Sciatic nerve (tissue), 2 donors: ENCODE measurements at regions of chr1 and their contacts with region 1.

Region 1: GRCh38 chr1:78676347-78676982 is 26.8 kb downstream of the IFI44 start:
- DNase-seq: peak; percentile 69
- ATAC-seq: peak; percentile 66

Region 2: DNA sequence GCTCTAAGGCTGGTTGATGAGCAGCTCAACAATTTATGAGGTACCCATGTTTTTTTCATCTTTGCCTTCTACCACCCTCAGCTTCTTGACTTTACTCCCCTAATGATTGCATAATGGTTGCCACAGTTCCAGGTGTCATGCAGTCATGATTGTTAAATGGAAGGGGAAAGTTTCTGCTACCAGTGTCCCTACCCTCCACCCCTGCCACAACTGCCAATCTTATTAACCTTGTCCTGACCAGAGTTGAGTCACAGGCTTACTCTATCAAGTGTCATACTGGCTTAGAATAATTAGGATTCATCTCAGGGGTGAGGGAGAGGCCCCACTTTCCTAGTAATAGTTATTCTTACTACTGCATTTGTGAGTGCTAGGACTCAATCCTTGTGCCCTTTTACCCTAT is 689.7 kb before region 1 on chr1:
- intact Hi-C with region 1: no loop called
- DNase-seq: no peak
- ATAC-seq: no peak

Region 3: GRCh38 chr1:78603206-78603605 is 73.3 kb before region 1 on chr1:
- intact Hi-C with region 1: no loop called
- DNase-seq: no peak
- ATAC-seq: no peak

Region 4: GRCh38 chr1:78617615-78618026 is 58.8 kb before region 1 on chr1:
- intact Hi-C with region 1: loop called (anchors 10 kb)
- DNase-seq: peak; percentile 67
- ATAC-seq: peak; percentile 86

Region 5: DNA sequence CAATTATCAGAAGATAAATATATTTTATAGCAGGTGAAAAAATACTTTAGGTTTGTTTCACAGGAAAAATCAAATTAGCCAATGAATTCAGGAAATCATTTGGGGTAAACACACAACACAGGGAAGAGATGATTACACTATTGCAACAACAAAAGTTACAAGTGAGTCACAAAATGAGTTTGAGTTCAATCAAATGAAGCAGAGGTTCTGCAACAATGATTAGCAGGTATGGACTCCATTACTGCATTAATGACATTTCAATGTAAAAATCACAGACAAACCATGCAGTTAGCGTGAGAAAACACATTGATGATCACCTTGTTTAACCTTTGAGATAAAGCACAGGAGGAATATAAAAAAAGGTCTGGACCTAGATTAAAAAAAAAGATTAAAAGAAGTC is 320.3 kb after region 1 on chr1:
- intact Hi-C with region 1: no loop called
- DNase-seq: no peak
- ATAC-seq: no peak